ENCODE measurements at regions of chr2 and their contacts with region 1.

Region 1: GRCh38 chr2:150610671-150611279 is 123.3 kb upstream of the RND3 start:
- DNase-seq: peak; percentile 35 to 56
- H3K4me3 ChIP-seq: no peak overlapping the region
- H3K27ac ChIP-seq: no peak overlapping the region
- H3K4me1 ChIP-seq: no peaks in the 10 kb centered on the region
- H3K27me3 ChIP-seq: no peaks in the 10 kb centered on the region
- CTCF ChIP-seq: peak; percentile 66

Region 2: GRCh38 chr2:150548527-150548926 is 62.2 kb before region 1 on chr2:
- CTCF ChIA-PET with region 1: no interaction called
- POLR2A ChIA-PET with region 1: no interaction called
- intact Hi-C with region 1: no loop called
- DNase-seq: no peak
- H3K4me3 ChIP-seq: no peak overlapping the region
- H3K27ac ChIP-seq: no peak overlapping the region
- H3K4me1 ChIP-seq: no peaks in the 10 kb centered on the region
- H3K27me3 ChIP-seq: no peaks in the 10 kb centered on the region
- CTCF ChIP-seq: peak; percentile 39; the same call in 1 of the 2 replicates

Region 3: GRCh38 chr2:150586858-150587257 is 23.9 kb before region 1 on chr2:
- CTCF ChIA-PET with region 1: no interaction called
- POLR2A ChIA-PET with region 1: no interaction called
- intact Hi-C with region 1: no loop called
- DNase-seq: peak; percentile 12 to 89
- H3K4me3 ChIP-seq: no peak overlapping the region
- H3K27ac ChIP-seq: peak overlapping the region; percentile 46; the same call in 1 of the 2 replicates
- H3K4me1 ChIP-seq: peaks cover 19% of the 10 kb centered on the region
- H3K27me3 ChIP-seq: no peaks in the 10 kb centered on the region
- CTCF ChIP-seq: no peak

Region 4: DNA sequence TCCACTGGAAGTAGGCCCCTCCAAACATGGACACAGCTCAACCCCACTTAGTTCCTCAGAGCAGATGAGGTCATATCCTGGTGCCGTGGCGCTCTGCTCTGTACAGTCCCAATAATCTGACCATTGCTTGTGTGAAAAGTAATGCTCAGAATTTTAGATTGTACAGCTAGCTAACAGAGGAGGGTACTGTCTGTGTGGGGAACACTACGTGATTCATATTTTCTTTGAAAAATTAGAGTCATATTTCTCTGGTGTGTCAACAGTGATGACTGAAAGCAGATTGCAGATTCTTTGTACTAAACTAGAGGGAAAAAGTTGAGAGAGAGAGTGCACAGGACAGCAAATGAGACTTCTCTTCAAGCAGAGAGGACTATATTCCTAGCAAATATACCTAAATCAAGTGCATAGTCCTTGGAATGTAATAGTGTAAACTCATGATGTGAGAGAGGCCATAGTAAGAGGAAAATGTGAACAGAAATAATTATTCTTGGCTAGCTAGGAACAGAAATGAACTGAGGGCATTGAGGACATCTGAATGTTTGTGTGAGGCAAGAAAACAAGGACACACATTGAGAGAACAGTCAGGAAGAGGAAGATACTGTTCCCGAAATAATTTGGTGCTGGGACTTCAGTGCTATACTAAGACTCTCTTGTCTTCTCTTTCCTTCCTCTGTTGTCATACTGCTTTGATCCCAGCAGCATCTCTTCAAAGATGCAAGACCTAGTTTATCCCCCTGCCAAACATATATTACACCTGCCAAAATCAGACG is 33.7 kb after region 1 on chr2:
- CTCF ChIA-PET with region 1: no interaction called
- POLR2A ChIA-PET with region 1: no interaction called
- intact Hi-C with region 1: no loop called
- DNase-seq: no peak
- H3K4me3 ChIP-seq: no peak overlapping the region
- H3K27ac ChIP-seq: no peak overlapping the region
- H3K4me1 ChIP-seq: no peaks in the 10 kb centered on the region
- H3K27me3 ChIP-seq: no peaks in the 10 kb centered on the region
- CTCF ChIP-seq: no peak

Region 5: GRCh38 chr2:151043486-151043885 is 432.7 kb after region 1 on chr2:
- CTCF ChIA-PET with region 1: no interaction called
- POLR2A ChIA-PET with region 1: no interaction called
- intact Hi-C with region 1: loop called (anchors 10 kb)
- DNase-seq: peak; percentile 39 to 87
- H3K4me3 ChIP-seq: no peak overlapping the region
- H3K27ac ChIP-seq: peak overlapping the region; percentile 78
- H3K4me1 ChIP-seq: peaks cover 8% of the 10 kb centered on the region; the same call in 1 of the 2 replicates
- H3K27me3 ChIP-seq: no peaks in the 10 kb centered on the region
- CTCF ChIP-seq: no peak

Measured in PC-9 (cell line).